ENCODE measurements at regions of chr19 and their contacts with region 1.

Region 1: GRCh38 chr19:21396893-21397572 is at the start of gene ZNF493:
- DNase-seq: peak; percentile 82 to 96 (median 92)
- ATAC-seq: peak; percentile 99
- H3K4me3 ChIP-seq: peak within 1 kb of the TSS; percentile 73 to 95
- H3K4me3 Mint-ChIP-seq: peak within 1 kb of the TSS; percentile 97
- H3K27ac ChIP-seq: peak within 1 kb of the TSS; percentile 72 to 76
- H3K27ac Mint-ChIP-seq: peak within 1 kb of the TSS; percentile 94
- H3K4me1 ChIP-seq: peaks cover 15% of the 10 kb centered on the region
- H3K4me1 Mint-ChIP-seq: peaks cover 38% of the 10 kb centered on the region
- H3K27me3 ChIP-seq: no peaks in the 10 kb centered on the region
- H3K27me3 Mint-ChIP-seq: no peaks in the 10 kb centered on the region
- CTCF ChIP-seq: no peak
- total RNA-seq, gene ZNF493: 44.6 to 46.1 TPM

Region 2: GRCh38 chr19:21141787-21142464 is 255.1 kb before region 1 on chr19 and contains the start of gene ZNF431:
- CTCF ChIA-PET with region 1: no interaction called
- POLR2A ChIA-PET with region 1: interaction called, 4 read pairs
- intact Hi-C with region 1: loop called in 1 of 2 experiments (anchors 5 kb)
- DNase-seq: peak; percentile 79 to 96 (median 88)
- ATAC-seq: peak; percentile 99
- H3K4me3 ChIP-seq: peak within 1 kb of the TSS; percentile 68 to 90
- H3K4me3 Mint-ChIP-seq: peak within 1 kb of the TSS; percentile 97
- H3K27ac ChIP-seq: peak within 1 kb of the TSS; percentile 65 to 85
- H3K27ac Mint-ChIP-seq: peak within 1 kb of the TSS; percentile 97
- H3K4me1 ChIP-seq: peaks cover 9% of the 10 kb centered on the region
- H3K4me1 Mint-ChIP-seq: peaks cover 46% of the 10 kb centered on the region
- H3K27me3 ChIP-seq: no peaks in the 10 kb centered on the region
- H3K27me3 Mint-ChIP-seq: no peaks in the 10 kb centered on the region
- CTCF ChIP-seq: no peak
- total RNA-seq, gene ZNF431: 31.2 to 32.4 TPM

Region 3: DNA sequence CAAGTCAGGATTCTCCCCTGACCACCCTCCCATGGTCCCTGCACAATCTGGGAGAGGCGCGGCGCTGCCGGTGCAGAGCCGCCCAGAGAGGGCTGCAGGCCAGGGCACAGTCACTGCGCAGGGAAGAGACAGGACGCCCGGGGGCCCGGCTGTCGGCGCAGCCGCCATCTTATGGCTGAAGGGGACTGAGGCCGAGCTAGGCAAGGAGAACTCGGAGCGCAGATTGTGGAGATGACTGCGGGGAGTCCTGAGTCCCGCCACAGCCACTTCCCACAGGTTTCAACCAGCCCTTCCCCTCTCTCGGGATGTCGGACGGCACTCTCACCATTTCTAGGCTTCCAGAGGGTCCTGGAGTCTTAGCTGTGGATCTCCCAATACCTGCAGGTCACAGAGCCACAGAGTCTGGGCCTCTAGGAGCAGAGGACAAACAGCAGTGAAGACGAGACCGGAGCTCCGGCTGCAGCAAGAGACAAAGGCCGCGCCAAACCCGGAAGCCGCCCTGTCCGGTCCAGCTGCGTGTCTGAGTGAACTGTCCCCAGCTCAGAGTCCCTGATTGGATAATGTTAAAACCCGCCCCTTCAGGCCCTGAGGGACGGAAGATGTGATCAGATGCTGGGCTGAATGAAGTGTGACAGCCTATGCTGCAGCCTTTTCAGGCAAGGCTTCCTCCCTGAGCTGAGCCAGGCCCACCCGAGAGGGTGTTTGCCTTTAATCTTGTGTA is 68.0 kb before region 1 on chr19 and contains the start of gene ZNF708:
- CTCF ChIA-PET with region 1: no interaction called
- POLR2A ChIA-PET with region 1: interaction called, 15 read pairs
- intact Hi-C with region 1: loop called (anchors 1 kb)
- DNase-seq: peak; percentile 32 to 90 (median 77)
- ATAC-seq: peak; percentile 95
- H3K4me3 ChIP-seq: peak within 1 kb of the TSS; percentile 91 to 97
- H3K4me3 Mint-ChIP-seq: peak within 1 kb of the TSS; percentile 97
- H3K27ac ChIP-seq: peak within 1 kb of the TSS; percentile 94 to 99
- H3K27ac Mint-ChIP-seq: peak within 1 kb of the TSS; percentile 98
- H3K4me1 ChIP-seq: peaks cover 17% of the 10 kb centered on the region
- H3K4me1 Mint-ChIP-seq: peaks cover 44% of the 10 kb centered on the region
- H3K27me3 ChIP-seq: no peaks in the 10 kb centered on the region
- H3K27me3 Mint-ChIP-seq: no peaks in the 10 kb centered on the region
- CTCF ChIP-seq: no peak
- total RNA-seq, gene ZNF708: 23.7 to 24.7 TPM

Region 4: DNA sequence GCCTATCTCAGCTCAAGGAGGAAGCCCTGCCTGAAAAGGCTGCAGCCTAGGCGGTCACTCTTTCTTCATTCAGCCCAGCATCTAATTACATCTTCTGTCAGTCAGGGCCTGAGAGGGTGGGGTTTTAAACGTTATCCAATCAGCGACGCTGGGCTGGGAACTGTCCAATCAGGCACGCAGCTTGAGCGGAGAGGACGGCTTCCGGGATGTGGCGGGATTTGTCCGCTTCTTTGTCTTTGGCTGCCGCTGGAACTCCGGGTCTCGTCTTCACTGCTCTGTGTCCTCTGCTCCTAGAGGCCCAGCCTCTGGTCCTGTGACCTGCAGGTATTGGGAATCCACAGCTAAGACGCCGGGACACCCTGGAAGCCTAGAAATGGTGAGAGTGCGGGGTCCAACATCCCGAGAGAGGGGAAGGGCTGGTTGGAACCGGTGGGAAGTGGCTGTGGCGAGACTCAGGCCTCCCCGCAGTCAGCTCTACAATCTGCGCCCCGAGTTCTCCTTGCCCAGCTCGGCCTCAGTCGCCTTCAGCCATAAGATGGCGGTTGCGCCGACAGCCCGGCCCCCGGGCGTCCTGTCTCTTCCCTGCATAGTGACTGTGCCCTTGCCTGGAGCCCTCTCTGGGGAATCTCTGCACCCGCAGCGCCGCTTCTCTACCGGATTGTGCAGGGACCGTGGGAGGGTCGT is 38.1 kb before region 1 on chr19 and contains the start of gene ZNF738:
- CTCF ChIA-PET with region 1: no interaction called
- POLR2A ChIA-PET with region 1: interaction called, 11 read pairs
- intact Hi-C with region 1: loop called (anchors 2 kb)
- DNase-seq: peak; percentile 67 to 91 (median 83)
- ATAC-seq: peak; percentile 95
- H3K4me3 ChIP-seq: peak within 1 kb of the TSS; percentile 86 to 94
- H3K4me3 Mint-ChIP-seq: peak within 1 kb of the TSS; percentile 98
- H3K27ac ChIP-seq: peak within 1 kb of the TSS; percentile 65 to 82
- H3K27ac Mint-ChIP-seq: peak within 1 kb of the TSS; percentile 92
- H3K4me1 ChIP-seq: peaks cover 7% of the 10 kb centered on the region
- H3K4me1 Mint-ChIP-seq: peaks cover 15% of the 10 kb centered on the region
- H3K27me3 ChIP-seq: no peaks in the 10 kb centered on the region
- H3K27me3 Mint-ChIP-seq: no peaks in the 10 kb centered on the region
- CTCF ChIP-seq: no peak
- total RNA-seq, gene ZNF738: 5.6 to 6.3 TPM

Region 5: DNA sequence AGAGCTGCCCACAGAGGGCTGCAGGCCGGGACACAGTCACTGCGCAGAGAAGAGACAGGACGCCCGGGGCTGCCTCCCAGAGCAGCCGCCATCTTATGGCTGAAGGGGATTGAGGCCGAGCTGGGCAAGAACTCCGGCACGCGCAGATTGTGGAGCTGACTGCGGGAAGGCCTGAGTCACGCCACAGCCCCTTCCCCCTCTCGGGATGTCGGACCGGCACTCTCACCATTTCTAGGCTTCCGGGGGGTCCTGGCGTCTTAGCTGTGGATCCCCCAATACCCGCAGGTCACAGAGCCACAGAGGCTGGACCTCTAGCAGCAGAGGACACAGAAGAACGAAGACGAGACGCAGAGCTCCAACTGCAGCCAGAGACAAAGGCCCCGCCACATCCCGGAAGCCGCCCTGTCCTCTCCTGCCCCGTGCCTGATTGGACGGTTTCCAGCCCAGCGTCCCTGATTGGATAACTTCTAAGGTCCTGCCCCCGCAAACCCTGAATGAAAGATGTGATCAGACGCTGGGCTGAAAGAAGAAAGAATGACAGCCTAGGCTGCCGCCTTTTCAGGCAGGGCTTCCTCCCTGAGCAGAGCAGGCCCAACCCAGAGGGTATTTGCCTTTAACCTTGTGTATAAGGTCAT is 438.9 kb after region 1 on chr19 and contains the start of gene ZNF43:
- CTCF ChIA-PET with region 1: no interaction called
- POLR2A ChIA-PET with region 1: interaction called, 7 read pairs
- intact Hi-C with region 1: loop called in 1 of 2 experiments (anchors 5 kb)
- DNase-seq: peak; percentile 85 to 96 (median 93)
- ATAC-seq: peak; percentile 97
- H3K4me3 ChIP-seq: peak within 1 kb of the TSS; percentile 84 to 85
- H3K4me3 Mint-ChIP-seq: peak within 1 kb of the TSS; percentile 98
- H3K27ac ChIP-seq: peak within 1 kb of the TSS; percentile 75 to 84
- H3K27ac Mint-ChIP-seq: peak within 1 kb of the TSS; percentile 97
- H3K4me1 ChIP-seq: peaks cover 9% of the 10 kb centered on the region
- H3K4me1 Mint-ChIP-seq: peaks cover 34% of the 10 kb centered on the region
- H3K27me3 ChIP-seq: no peaks in the 10 kb centered on the region
- H3K27me3 Mint-ChIP-seq: no peaks in the 10 kb centered on the region
- CTCF ChIP-seq: no peak
- total RNA-seq, gene ZNF43: 29.9 to 31.8 TPM